GM18951 (cell line): ENCODE measurements at regions of chr19 and their contacts with region 1.

Region 1: DNA sequence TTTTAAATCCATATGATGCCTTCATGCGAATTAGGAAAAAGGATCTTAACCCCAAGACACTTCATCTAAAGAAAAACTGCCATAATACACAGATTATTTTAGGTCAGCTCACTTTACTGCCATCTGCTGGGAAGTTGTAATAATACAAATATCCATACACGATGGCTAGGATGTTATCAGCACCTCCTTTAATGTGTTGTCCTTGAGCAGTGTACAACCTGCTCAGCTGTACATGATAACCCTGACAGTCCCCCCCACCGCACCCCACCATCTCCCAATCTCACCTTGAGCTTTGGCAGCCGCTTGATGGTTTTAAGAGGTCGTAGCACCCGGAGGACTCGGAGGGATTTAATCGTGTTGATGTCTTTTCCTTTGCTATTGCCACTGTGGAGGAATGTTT is 112.2 kb downstream of the IER2 start:
- POLR2A ChIP-seq: no peak

Region 2: DNA sequence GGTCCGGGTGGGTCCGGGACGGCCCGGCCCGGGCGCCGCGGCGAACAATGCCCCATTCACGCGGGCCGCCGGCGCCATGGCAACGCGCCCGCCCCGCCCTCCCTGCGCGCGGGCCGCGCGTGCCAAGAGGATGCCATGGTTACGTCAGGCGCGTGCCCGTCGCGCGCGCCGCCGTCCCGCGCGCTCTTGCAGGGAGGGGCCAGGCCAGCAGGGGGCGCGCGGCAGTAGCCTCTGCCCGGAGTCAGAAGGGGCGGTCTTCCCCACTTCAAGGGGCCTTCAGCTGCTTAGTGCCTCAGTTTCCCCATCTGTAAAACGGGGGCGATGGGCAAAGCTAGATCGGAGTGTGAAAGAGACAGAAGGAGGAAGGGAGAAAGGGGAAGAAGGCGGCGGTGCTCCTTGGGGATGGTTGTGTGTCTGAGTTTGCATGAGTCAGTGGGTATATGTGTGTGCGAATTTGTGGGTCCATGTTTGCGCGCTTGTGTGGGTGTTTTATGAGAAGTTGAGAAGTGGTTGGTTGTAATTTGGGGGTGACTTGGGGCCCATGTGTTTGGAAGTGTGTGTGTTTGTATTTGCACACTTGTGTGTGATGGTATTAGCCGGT is 278.8 kb before region 1 on chr19:
- in situ Hi-C with region 1: loop called (anchors 25 kb)
- POLR2A ChIP-seq: no peak

Region 3: GRCh38 chr19:13132471-13133180 is 129.8 kb before region 1 on chr19:
- in situ Hi-C with region 1: no loop called
- POLR2A ChIP-seq: no peak

Region 4: DNA sequence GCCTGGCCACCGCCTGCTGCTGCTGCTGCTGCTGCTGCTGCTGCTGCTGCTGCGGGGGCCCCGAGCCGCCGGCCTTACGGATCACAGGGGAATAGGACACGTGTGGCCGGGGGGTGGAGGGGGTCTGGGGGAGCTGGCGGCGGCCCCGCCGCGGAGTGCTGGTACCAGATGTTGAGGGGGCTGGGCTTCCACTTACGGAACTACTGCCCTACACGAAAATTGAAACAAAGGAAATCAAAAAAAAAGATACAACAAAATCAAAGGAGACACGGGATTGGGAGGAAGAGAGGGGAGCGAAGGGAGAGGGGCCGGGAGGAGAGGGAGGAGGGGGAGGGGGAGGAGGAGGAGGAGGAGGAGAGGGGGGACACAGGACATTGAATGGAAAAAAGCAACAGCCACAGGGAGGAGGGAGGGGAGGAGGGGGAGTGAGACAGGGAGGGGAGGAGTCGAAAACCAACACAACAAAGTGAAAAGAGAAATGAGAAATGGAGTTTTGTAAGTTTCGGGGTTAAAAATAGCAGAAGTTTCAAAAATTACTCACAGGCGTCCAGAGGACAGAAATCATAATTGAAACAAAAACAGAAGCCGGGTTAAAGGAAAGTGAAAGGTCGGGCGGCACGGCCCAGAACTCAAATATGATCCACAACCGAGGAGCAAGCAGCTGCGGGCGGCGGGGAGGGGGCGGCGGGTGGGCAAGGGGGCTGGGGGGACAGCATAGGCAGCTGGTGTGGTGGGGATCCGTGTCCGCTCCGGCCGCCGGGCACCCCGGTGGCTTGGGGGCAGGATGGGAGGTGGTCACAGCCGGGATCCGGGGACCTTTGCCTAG is 54.4 kb before region 1 on chr19:
- in situ Hi-C with region 1: loop called (anchors 10 kb)
- POLR2A ChIP-seq: no peak